HepG2 (cell line): ENCODE measurements at regions of chr14 and their contacts with region 1.

Region 1: GRCh38 chr14:58297762-58298476 is 436 bp upstream of the ARID4A start:
- DNase-seq: peak; percentile 100
- ATAC-seq: peak; percentile 94
- H3K4me3 ChIP-seq: peak overlapping the region; percentile 83 to 95 (median 86)
- H3K27ac ChIP-seq: peak overlapping the region; percentile 96
- H3K4me1 ChIP-seq: peaks cover 44% of the 10 kb centered on the region
- H3K27me3 ChIP-seq: no peaks in the 10 kb centered on the region; a peak in 1 of 5 replicates
- CTCF ChIP-seq: peak; percentile 41
- EP300 ChIP-seq: peak in 1 of 2 experiments; percentile 54; a peak in 1 of 4 replicates
- POLR2A ChIP-seq: peak; percentile 70 to 79; a peak in 3 of 4 replicates
- RAD21 ChIP-seq: no peak

Region 2: DNA sequence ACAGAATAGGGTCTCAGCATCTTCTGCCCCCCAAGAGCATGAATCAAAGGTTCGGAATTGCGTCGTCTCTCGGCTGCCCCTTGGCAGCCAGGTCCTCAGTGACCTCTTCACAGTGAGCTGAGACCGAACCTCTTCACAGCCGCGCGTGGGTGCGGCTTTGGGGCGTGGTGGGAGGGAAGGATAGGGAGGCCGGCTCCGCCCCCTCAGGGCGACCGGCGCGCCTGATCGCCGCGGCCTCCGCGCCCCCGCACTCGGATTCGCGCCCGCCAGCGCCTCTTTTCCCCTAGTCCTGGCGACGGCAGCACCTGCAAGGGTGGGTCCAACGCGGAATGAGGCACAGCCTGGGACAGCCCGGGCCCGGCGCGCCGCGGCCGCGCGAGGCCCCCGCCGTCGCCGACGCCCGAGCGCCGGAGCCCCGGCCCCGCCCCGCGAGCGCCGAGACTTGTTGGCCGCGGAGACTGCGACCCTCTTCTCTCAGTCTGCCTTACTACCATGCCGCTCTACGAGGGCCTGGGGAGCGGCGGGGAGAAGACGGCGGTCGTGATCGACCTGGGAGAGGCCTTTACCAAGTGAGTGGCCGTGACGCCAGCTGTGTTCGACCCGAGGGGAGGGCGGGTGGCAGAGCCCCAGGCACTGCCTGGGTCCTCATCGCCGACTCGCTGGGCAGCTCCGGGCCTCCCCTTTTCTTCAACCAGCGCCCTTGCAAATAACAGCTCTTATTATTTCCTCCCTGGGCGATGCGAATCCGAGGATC is 98.0 kb before region 1 on chr14 and contains the start of gene ACTR10:
- CTCF ChIA-PET with region 1: no interaction called
- POLR2A ChIA-PET with region 1: interaction called, 17 read pairs
- in situ Hi-C with region 1: no loop called
- intact Hi-C with region 1: no loop called
- DNase-seq: peak; percentile 75
- ATAC-seq: peak; percentile 98
- H3K4me3 ChIP-seq: peak within 1 kb of the TSS; percentile 93 to 98 (median 97)
- H3K27ac ChIP-seq: peak within 1 kb of the TSS; percentile 72
- H3K4me1 ChIP-seq: peaks cover 24% of the 10 kb centered on the region
- H3K27me3 ChIP-seq: no peaks in the 10 kb centered on the region; a peak in 1 of 5 replicates
- CTCF ChIP-seq: no peak
- EP300 ChIP-seq: no peak
- POLR2A ChIP-seq: peak; percentile 63 to 76
- RAD21 ChIP-seq: peak; percentile 34
- total RNA-seq, gene ACTR10: 41.3 and 49.4 TPM in 2 replicates

Region 3: DNA sequence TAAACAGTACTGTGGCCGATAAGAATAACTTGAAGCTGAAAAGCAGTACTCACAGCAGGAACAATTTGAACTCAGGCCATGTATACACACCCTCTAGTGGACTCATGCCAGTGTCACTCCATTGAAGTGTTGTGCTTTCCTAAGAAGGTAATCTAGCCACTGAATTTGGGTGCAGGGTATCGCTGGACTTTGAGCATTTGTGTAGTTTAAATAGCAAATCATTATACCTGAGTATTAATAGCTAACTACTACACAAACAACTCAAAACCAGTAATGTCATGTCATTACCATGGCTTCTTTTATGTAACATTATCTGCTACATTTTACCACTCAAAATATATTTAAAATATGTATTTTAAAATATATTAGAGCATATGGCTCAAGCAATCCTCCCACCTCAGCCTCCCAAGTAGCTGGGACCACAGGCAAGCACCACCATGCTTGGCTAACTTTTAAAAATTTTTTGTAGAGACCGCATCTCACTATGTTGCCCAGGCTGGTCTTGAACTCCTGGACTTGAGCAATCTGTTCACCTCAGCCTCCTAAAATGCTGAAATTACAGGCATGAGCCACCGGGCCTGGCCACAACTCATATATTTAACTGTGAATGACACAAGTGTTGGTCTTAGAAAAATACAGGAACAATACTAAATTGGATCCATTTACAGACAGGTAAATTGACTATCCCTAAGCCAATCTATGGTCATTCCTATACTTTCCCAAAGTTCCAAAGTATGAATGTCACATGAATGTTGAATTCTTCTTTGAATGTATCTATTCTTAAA is 25.1 kb before region 1 on chr14:
- CTCF ChIA-PET with region 1: no interaction called
- POLR2A ChIA-PET with region 1: interaction called, 92 read pairs
- in situ Hi-C with region 1: no loop called
- intact Hi-C with region 1: no loop called
- DNase-seq: peak; percentile 98
- ATAC-seq: peak; percentile 97
- H3K4me3 ChIP-seq: no peak overlapping the region; a peak in 1 of 6 replicates
- H3K27ac ChIP-seq: peak overlapping the region; percentile 89
- H3K4me1 ChIP-seq: peaks cover 70% of the 10 kb centered on the region
- H3K27me3 ChIP-seq: no peaks in the 10 kb centered on the region
- CTCF ChIP-seq: peak; percentile 77
- EP300 ChIP-seq: peak in 1 of 2 experiments; percentile 70; a peak in 2 of 4 replicates
- POLR2A ChIP-seq: peak; percentile 50 to 51; a peak in 3 of 4 replicates
- RAD21 ChIP-seq: peak; percentile 68; the same call in 1 of the 2 replicates

Region 4: DNA sequence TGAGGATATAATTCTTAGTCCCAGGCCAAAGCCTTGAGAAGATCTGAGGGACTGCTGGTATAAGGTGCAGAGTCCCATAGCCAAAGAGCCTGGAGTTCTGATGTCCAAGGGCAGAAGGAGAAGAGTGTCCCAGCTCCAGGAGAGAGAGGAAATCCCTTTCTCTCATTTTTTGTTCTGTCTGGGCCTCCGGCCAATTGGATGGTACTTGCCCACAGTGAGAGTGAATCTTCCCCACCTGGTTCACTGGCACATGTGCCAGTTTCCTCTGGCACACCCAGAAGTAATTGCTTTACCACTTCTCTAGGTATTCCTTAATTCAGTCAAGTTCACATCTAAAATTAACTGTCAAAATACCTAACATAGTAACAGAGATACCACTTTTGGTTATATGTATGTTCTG is 15.8 kb after region 1 on chr14:
- CTCF ChIA-PET with region 1: no interaction called
- POLR2A ChIA-PET with region 1: interaction called, 10 read pairs
- in situ Hi-C with region 1: no loop called
- intact Hi-C with region 1: no loop called
- DNase-seq: no peak
- ATAC-seq: no peak
- H3K4me3 ChIP-seq: no peak overlapping the region
- H3K27ac ChIP-seq: no peak overlapping the region
- H3K4me1 ChIP-seq: no peaks in the 10 kb centered on the region
- H3K27me3 ChIP-seq: no peaks in the 10 kb centered on the region
- CTCF ChIP-seq: no peak
- EP300 ChIP-seq: no peak
- POLR2A ChIP-seq: no peak
- RAD21 ChIP-seq: no peak

Region 5: DNA sequence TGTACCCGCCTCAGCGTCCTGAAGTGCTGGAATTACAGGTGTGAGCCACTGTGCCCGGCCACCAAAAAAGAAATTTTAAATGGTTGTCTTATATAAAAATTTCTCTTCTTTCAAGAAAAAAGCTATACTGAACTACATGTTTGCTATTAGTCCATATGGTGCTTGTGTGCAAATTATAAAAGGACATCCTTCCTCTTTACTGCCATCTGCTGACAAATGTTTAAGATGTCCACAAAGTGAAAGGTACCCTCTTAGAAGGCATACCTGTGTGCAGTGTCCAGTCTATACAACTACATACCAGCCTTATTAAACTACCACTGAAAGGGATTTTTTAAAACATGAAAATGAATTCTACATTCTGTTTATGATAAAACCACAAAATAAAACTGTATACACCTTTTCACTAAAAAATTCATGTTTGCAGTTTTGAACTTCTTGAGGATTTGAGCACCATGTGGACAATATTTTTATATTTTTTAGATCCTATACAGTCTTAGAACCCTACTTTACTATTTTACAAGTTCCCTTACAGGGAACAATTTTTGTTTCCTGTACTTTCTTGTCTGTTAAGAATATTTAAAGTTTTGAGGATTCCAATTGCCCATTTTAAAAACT is 65.0 kb after region 1 on chr14:
- CTCF ChIA-PET with region 1: no interaction called
- POLR2A ChIA-PET with region 1: no interaction called
- in situ Hi-C with region 1: no loop called
- intact Hi-C with region 1: no loop called
- DNase-seq: peak; percentile 41
- ATAC-seq: peak; percentile 89
- H3K4me3 ChIP-seq: no peak overlapping the region
- H3K27ac ChIP-seq: no peak overlapping the region
- H3K4me1 ChIP-seq: no peaks in the 10 kb centered on the region
- H3K27me3 ChIP-seq: no peaks in the 10 kb centered on the region
- CTCF ChIP-seq: peak; percentile 52
- EP300 ChIP-seq: no peak
- POLR2A ChIP-seq: no peak
- RAD21 ChIP-seq: no peak

Region 6: DNA sequence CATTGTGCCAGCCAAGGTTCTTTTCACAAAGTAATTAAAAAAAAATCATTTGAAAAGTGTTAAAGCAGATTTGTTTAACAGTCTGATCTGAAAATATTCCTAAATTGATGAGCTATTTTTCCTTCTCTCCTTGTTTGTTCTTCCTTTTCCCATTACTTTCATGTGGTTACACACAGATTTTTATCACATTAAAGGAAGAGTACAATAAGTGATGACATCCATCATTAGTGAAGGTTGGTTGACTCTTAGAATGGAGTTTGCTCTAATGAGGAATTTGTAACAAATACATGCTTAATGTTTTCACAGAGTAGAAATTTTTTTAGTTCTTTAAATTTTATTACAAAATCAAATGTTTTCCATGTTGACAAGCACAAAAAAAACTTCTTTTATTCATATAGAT is 78.9 kb after region 1 on chr14:
- CTCF ChIA-PET with region 1: no interaction called
- POLR2A ChIA-PET with region 1: no interaction called
- in situ Hi-C with region 1: no loop called
- intact Hi-C with region 1: no loop called
- DNase-seq: no peak
- ATAC-seq: no peak
- H3K4me3 ChIP-seq: no peak overlapping the region
- H3K27ac ChIP-seq: no peak overlapping the region
- H3K4me1 ChIP-seq: peaks cover 7% of the 10 kb centered on the region
- H3K27me3 ChIP-seq: no peaks in the 10 kb centered on the region
- CTCF ChIP-seq: no peak
- EP300 ChIP-seq: no peak
- POLR2A ChIP-seq: no peak
- RAD21 ChIP-seq: no peak

Region 7: DNA sequence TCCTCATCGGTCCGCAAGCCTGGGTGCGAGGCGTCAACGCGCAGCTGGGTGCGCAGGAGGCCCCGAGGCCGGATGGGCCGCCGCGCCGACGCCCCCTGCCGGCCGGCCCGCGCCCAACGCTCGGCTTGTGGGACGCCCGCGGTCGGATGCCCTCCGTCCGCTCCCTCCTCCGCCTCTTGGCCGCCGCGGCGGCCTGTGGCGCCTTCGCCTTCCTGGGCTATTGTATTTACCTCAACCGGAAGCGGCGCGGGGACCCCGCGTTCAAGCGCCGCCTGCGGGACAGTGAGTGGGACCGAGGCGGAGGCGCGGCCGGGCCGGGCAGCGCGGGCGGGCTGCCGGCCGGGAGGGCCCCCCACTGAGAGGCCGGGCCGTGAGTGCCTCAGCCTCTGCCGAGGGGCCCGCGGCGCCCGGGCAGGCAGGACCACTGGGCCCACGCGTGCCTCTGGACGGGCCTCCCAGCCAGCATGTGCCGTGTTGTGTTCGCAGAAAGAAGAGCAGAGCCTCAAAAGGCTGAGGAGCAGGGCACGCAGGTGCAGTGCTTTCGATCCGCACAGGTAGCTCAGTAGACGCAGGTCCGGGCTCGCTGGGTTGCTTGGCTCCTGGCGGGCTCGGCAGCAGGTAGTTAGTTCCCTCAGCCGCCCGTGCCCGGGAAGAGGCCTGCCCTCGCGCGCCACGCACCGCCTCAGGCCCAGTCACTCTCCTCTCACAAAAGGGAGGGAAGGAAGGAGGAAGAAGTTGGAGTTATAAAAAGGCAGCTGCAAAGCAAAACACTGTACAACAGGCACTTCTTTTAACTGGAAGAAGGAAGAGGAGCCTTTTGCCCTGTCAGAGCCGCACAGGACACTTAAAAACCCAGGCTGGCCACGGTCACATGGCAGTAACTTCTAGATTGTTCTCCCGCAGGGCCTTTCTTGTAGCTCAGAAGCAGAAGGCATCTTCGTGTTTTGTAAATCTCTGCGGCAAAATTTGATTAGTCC is 98.2 kb after region 1 on chr14 and contains the start of gene TOMM20L:
- CTCF ChIA-PET with region 1: no interaction called
- POLR2A ChIA-PET with region 1: interaction called, 19 read pairs
- in situ Hi-C with region 1: no loop called
- intact Hi-C with region 1: no loop called
- DNase-seq: peak; percentile 72
- ATAC-seq: peak; percentile 92
- H3K4me3 ChIP-seq: peak within 1 kb of the TSS; percentile 63 to 83 (median 75)
- H3K27ac ChIP-seq: peak within 1 kb of the TSS; percentile 93
- H3K4me1 ChIP-seq: peaks cover 21% of the 10 kb centered on the region
- H3K27me3 ChIP-seq: no peaks in the 10 kb centered on the region; a peak in 1 of 5 replicates
- CTCF ChIP-seq: peak; percentile 73
- EP300 ChIP-seq: no peak
- POLR2A ChIP-seq: peak in 1 of 2 experiments; percentile 28; a peak in 3 of 4 replicates
- RAD21 ChIP-seq: peak; percentile 82
- total RNA-seq, gene TOMM20L: 0.46 TPM in 1 of 2 replicates, not detected in the other